GM12878 (cell line): ENCODE measurements at regions of chr1 and their contacts with region 1.

Region 1: GRCh38 chr1:115782571-115783281 is 14.2 kb upstream of the CASQ2 start:
- DNase-seq: no peak
- ATAC-seq: no peak
- H3K4me3 ChIP-seq: no peak overlapping the region
- H3K27ac ChIP-seq: no peak overlapping the region
- H3K4me1 ChIP-seq: no peaks in the 10 kb centered on the region
- H3K27me3 ChIP-seq: 0 out of 4 replicates have a peak, but pooled peaks cover 0 to 2% of the 10 kb centered on the region in 2 experiments
- CTCF ChIP-seq: no peak
- EP300 ChIP-seq: no peak
- POLR2A ChIP-seq: no peak
- RAD21 ChIP-seq: no peak

Region 2: GRCh38 chr1:115865704-115866380 is 83.1 kb after region 1 on chr1:
- CTCF ChIA-PET with region 1: no interaction called
- POLR2A ChIA-PET with region 1: interaction called, 10 read pairs
- RAD21 ChIA-PET with region 1: no interaction called
- SMC1A ChIA-PET with region 1: no interaction called
- in situ Hi-C with region 1: no loop called
- intact Hi-C with region 1: no loop called
- DNase-seq: no peak
- ATAC-seq: no peak
- H3K4me3 ChIP-seq: no peak overlapping the region
- H3K27ac ChIP-seq: no peak overlapping the region
- H3K4me1 ChIP-seq: no peaks in the 10 kb centered on the region
- H3K27me3 ChIP-seq: peaks cover 1 to 3% of the 10 kb centered on the region in 2 experiments; a peak in 3 of 4 replicates
- CTCF ChIP-seq: no peak
- EP300 ChIP-seq: no peak
- POLR2A ChIP-seq: no peak
- RAD21 ChIP-seq: no peak